AG04449 (cell line): ENCODE measurements at regions of chr18 and their contacts with region 1.

Region 1: GRCh38 chr18:59823596-59824195 is 76.1 kb upstream of the PMAIP1 start:
- DNase-seq: no peak
- H3K4me3 ChIP-seq: no peak overlapping the region
- CTCF ChIP-seq: peak; percentile 79

Region 2: GRCh38 chr18:59308248-59308937 is 515.3 kb before region 1 on chr18:
- CTCF ChIA-PET with region 1: interaction called, 18 read pairs
- POLR2A ChIA-PET with region 1: no interaction called
- DNase-seq: no peak
- H3K4me3 ChIP-seq: peak overlapping the region; percentile 48
- CTCF ChIP-seq: peak; percentile 97

Region 3: GRCh38 chr18:59617468-59617932 is 206.2 kb before region 1 on chr18:
- CTCF ChIA-PET with region 1: interaction called, 51 read pairs
- POLR2A ChIA-PET with region 1: no interaction called
- DNase-seq: no peak
- H3K4me3 ChIP-seq: no peak overlapping the region
- CTCF ChIP-seq: no peak

Region 4: GRCh38 chr18:59646228-59646962 is 177.3 kb before region 1 on chr18:
- CTCF ChIA-PET with region 1: interaction called, 31 read pairs
- POLR2A ChIA-PET with region 1: no interaction called
- DNase-seq: no peak
- H3K4me3 ChIP-seq: no peak overlapping the region
- CTCF ChIP-seq: no peak

Region 5: GRCh38 chr18:59690996-59691395 is 132.7 kb before region 1 on chr18:
- CTCF ChIA-PET with region 1: interaction called, 103 read pairs
- POLR2A ChIA-PET with region 1: no interaction called
- DNase-seq: no peak
- H3K4me3 ChIP-seq: no peak overlapping the region
- CTCF ChIP-seq: no peak

Region 6: DNA sequence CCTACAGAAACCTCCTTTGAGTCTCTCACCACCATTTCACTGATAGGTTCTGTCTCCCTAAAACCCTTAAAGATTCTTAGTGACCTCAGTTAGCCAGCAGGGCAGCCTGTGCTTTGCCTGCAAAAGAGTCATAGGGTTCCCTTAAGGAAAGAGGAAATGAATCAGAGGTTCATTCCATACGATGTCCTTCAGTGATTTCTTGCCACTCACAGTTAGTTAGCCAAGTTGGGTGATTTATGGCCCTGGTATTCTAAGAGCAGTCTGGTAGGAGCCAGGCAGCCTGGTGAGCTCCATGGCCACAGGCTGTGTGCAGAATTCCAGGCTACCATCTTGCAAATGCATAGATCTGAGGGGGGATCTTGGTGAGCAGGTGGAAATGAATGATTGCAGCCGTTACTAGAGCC is 107.7 kb before region 1 on chr18:
- CTCF ChIA-PET with region 1: interaction called, 22 read pairs
- POLR2A ChIA-PET with region 1: interaction called, 5 read pairs
- DNase-seq: peak; percentile 69
- H3K4me3 ChIP-seq: no peak overlapping the region
- CTCF ChIP-seq: peak; percentile 17

Region 7: DNA sequence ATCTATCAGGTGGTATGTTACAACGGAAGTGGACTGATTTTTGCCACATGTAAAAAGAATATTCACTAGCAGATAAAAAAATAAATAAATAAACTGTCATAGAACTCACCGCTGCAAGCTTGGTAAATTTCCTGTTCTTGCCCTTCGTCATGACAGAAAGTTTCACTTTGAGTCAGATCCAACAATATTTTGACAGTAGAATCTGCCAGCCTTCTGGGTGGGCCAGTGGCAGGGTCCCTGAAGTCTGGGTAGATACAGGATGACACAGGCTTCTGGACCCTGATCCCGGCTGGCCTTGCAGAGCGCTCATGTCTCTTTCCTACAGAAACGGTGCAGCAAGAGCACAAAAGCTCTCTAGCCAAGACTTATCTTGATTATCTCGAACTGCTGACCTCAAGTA is 21.7 kb before region 1 on chr18:
- CTCF ChIA-PET with region 1: interaction called, 15 read pairs
- POLR2A ChIA-PET with region 1: no interaction called
- DNase-seq: no peak
- H3K4me3 ChIP-seq: no peak overlapping the region
- CTCF ChIP-seq: no peak

Region 8: DNA sequence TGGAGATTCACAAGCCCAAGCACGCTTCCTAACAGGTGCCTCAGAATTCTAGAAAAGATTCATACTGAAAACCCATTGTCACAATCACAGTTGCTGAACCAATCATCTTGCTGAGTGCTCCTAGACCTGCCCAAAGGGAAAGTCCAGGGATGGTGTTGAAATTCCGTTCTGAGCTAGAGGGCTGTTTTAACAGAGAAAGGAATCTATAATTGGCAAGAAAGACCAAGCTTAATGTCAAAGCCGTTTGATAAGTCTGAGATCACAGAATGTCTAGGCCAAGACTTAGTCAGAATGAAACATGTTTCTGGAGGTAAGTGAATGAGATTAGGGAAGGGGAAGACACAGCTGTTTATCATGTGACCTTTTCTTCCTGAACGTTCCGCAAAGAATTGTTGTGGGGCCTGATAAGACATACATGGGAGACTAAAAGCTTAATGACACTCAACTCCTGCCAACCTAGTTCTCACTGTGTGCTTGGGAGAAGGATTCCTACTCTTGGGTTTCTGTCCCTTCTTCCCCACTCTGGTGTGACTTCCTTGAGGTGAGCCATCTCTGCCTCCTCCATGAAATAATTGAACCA is 103.6 kb after region 1 on chr18:
- CTCF ChIA-PET with region 1: no interaction called
- POLR2A ChIA-PET with region 1: no interaction called
- DNase-seq: no peak
- H3K4me3 ChIP-seq: no peak overlapping the region
- CTCF ChIP-seq: no peak